ENCODE measurements at regions of chr3 and their contacts with region 1.

Region 1: GRCh38 chr3:11145888-11146287 is 8.4 kb upstream of the HRH1 start:
- DNase-seq: no peak
- ATAC-seq: peak; percentile 42
- H3K4me3 ChIP-seq: no peak overlapping the region
- H3K27ac ChIP-seq: peak overlapping the region in 1 of 2 donors; percentile 4
- H3K4me1 ChIP-seq: no peaks in the 10 kb centered on the region
- H3K27me3 ChIP-seq: no peaks in the 10 kb centered on the region

Region 2: GRCh38 chr3:10532939-10533736 is 612.8 kb before region 1 on chr3:
- intact Hi-C with region 1: no loop called
- DNase-seq: peak in 1 of 2 donors; percentile 35
- ATAC-seq: no peak
- H3K4me3 ChIP-seq: no peak overlapping the region
- H3K27ac ChIP-seq: no peak overlapping the region
- H3K4me1 ChIP-seq: no peaks in the 10 kb centered on the region
- H3K27me3 ChIP-seq: no peaks in the 10 kb centered on the region

Region 3: GRCh38 chr3:10926811-10927521 is 218.9 kb before region 1 on chr3:
- intact Hi-C with region 1: no loop called
- DNase-seq: peak in 1 of 2 donors; percentile 60
- ATAC-seq: peak; percentile 72
- H3K4me3 ChIP-seq: no peak overlapping the region
- H3K27ac ChIP-seq: no peak overlapping the region
- H3K4me1 ChIP-seq: no peaks in the 10 kb centered on the region
- H3K27me3 ChIP-seq: no peaks in the 10 kb centered on the region

Region 4: GRCh38 chr3:11096266-11097135 is 49.4 kb before region 1 on chr3:
- intact Hi-C with region 1: loop called (anchors 5 kb)
- DNase-seq: peak; percentile 92 to 96
- ATAC-seq: peak; percentile 92
- H3K4me3 ChIP-seq: no peak overlapping the region
- H3K27ac ChIP-seq: peak overlapping the region; percentile 71 to 72
- H3K4me1 ChIP-seq: no peaks in the 10 kb centered on the region
- H3K27me3 ChIP-seq: no peaks in the 10 kb centered on the region

Measured in aorta (tissue), 5 donors.